ENCODE measurements at regions of chr11 and their contacts with region 1.

Region 1: GRCh38 chr11:14454861-14455632 is 44.6 kb downstream of the COPB1 start:
- DNase-seq: no peak
- H3K4me3 ChIP-seq: no peak overlapping the region
- H3K27ac ChIP-seq: no peak overlapping the region
- H3K4me1 ChIP-seq: no peaks in the 10 kb centered on the region
- H3K27me3 ChIP-seq: no peaks in the 10 kb centered on the region
- CTCF ChIP-seq: peak in 2 of 3 experiments; percentile 28 to 42
- POLR2A ChIP-seq: no peak

Region 2: GRCh38 chr11:14300661-14301304 is 154.3 kb before region 1 on chr11:
- intact Hi-C with region 1: loop called (anchors 5 kb)
- DNase-seq: no peak
- H3K4me3 ChIP-seq: no peak overlapping the region
- H3K27ac ChIP-seq: no peak overlapping the region
- H3K4me1 ChIP-seq: peaks cover 11% of the 10 kb centered on the region
- H3K27me3 ChIP-seq: no peaks in the 10 kb centered on the region
- CTCF ChIP-seq: peak; percentile 41 to 81 (median 47)
- POLR2A ChIP-seq: no peak

Region 3: GRCh38 chr11:14422052-14422813 is 32.8 kb before region 1 on chr11:
- intact Hi-C with region 1: no loop called
- DNase-seq: peak; percentile 90 to 93
- H3K4me3 ChIP-seq: no peak overlapping the region
- H3K27ac ChIP-seq: peak overlapping the region; percentile 37
- H3K4me1 ChIP-seq: peaks cover 20% of the 10 kb centered on the region
- H3K27me3 ChIP-seq: no peaks in the 10 kb centered on the region
- CTCF ChIP-seq: no peak
- POLR2A ChIP-seq: no peak

Region 4: GRCh38 chr11:15493921-15494620 is 1039.0 kb after region 1 on chr11:
- intact Hi-C with region 1: no loop called
- DNase-seq: no peak
- H3K4me3 ChIP-seq: no peak overlapping the region
- H3K27ac ChIP-seq: no peak overlapping the region
- H3K4me1 ChIP-seq: no peaks in the 10 kb centered on the region
- H3K27me3 ChIP-seq: no peaks in the 10 kb centered on the region
- CTCF ChIP-seq: no peak
- POLR2A ChIP-seq: no peak

Region 5: GRCh38 chr11:16293204-16293681 is 1838.2 kb after region 1 on chr11:
- intact Hi-C with region 1: no loop called
- DNase-seq: no peak
- H3K4me3 ChIP-seq: no peak overlapping the region
- H3K27ac ChIP-seq: no peak overlapping the region
- H3K4me1 ChIP-seq: no peaks in the 10 kb centered on the region
- H3K27me3 ChIP-seq: no peaks in the 10 kb centered on the region
- CTCF ChIP-seq: no peak
- POLR2A ChIP-seq: no peak